ENCODE measurements at regions of chr3 and their contacts with region 1.

Region 1: DNA sequence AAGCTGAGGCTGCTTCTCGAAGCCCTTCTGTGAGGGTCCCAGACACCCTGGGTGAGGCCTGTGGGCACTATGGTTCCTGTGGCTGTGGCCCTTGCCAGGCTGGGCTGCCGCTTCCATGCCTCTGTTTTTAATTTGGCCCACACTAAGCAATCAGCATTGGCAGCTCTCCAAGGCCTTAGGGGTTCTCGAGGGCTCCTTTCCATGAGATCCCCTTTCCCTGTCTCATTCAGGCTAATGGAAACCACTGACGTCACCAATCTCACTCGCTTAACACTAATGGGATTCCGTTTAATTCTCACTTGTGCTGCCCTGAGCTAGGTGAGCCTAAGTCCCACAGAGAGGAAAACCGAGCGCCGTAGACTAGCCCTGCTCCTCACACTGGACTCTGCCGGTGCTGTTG is 60.2 kb upstream of the RAB6B start:
- DNase-seq: no peak
- ATAC-seq: no peak
- H3K4me3 ChIP-seq: no peak overlapping the region
- H3K27ac ChIP-seq: no peak overlapping the region
- H3K4me1 ChIP-seq: no peaks in the 10 kb centered on the region
- H3K27me3 ChIP-seq: no peaks in the 10 kb centered on the region
- CTCF ChIP-seq: no peak
- POLR2A ChIP-seq: no peak
- RAD21 ChIP-seq: no peak

Region 2: DNA sequence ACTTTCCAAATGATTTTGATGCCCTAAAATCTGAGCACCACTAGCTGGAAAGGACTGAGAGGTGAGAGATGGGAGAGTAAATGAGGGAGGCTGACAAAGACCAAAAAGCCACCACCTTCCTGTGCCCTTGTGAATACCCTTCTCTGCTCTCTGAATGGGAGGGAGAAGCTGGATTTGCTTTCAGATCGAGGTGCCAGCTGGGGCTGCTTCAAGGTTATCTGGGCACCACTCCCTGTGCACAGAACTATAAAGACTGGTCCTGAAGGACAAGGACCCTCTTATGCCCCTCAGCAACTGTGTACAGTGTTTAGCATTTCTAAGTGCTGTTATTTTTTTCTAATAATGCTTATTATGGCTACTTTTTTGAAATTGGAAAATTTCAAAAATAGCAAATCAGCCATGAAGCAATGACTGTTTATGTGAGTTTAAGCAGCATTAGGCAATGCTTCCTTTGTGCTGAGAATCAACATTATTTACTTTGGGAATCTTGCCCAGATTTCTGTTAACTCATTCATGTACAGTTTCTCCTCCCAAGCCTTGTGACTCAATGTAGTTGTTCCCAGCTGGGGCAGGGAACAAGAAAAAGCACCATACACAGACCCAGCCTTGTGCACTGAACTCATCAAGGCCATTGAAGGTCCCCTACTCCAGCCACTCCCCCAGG is 419.8 kb before region 1 on chr3:
- CTCF ChIA-PET with region 1: no interaction called
- POLR2A ChIA-PET with region 1: no interaction called
- dilution Hi-C with region 1: no loop called
- in situ Hi-C with region 1: no loop called
- intact Hi-C with region 1: no loop called
- DNase-seq: peak; percentile 98
- ATAC-seq: peak; percentile 82
- H3K4me3 ChIP-seq: no peak overlapping the region
- H3K27ac ChIP-seq: peak overlapping the region; percentile 91
- H3K4me1 ChIP-seq: peaks cover 29% of the 10 kb centered on the region
- H3K27me3 ChIP-seq: no peaks in the 10 kb centered on the region
- CTCF ChIP-seq: no peak
- POLR2A ChIP-seq: no peak
- RAD21 ChIP-seq: no peak; the same call in 1 of the 2 replicates

Region 3: GRCh38 chr3:133996251-133996661 is 40.4 kb after region 1 on chr3:
- CTCF ChIA-PET with region 1: no interaction called
- POLR2A ChIA-PET with region 1: no interaction called
- dilution Hi-C with region 1: no loop called
- in situ Hi-C with region 1: no loop called
- intact Hi-C with region 1: loop called (anchors 1 kb)
- DNase-seq: no peak
- ATAC-seq: no peak
- H3K4me3 ChIP-seq: no peak overlapping the region
- H3K27ac ChIP-seq: no peak overlapping the region
- H3K4me1 ChIP-seq: 0 out of 2 replicates have a peak, but pooled peaks cover 2% of the 10 kb centered on the region
- H3K27me3 ChIP-seq: peaks cover 6% of the 10 kb centered on the region
- CTCF ChIP-seq: no peak
- POLR2A ChIP-seq: no peak
- RAD21 ChIP-seq: no peak

Measured in IMR-90 (cell line).